ENCODE measurements at regions of chr1 and their contacts with region 1.

Region 1: DNA sequence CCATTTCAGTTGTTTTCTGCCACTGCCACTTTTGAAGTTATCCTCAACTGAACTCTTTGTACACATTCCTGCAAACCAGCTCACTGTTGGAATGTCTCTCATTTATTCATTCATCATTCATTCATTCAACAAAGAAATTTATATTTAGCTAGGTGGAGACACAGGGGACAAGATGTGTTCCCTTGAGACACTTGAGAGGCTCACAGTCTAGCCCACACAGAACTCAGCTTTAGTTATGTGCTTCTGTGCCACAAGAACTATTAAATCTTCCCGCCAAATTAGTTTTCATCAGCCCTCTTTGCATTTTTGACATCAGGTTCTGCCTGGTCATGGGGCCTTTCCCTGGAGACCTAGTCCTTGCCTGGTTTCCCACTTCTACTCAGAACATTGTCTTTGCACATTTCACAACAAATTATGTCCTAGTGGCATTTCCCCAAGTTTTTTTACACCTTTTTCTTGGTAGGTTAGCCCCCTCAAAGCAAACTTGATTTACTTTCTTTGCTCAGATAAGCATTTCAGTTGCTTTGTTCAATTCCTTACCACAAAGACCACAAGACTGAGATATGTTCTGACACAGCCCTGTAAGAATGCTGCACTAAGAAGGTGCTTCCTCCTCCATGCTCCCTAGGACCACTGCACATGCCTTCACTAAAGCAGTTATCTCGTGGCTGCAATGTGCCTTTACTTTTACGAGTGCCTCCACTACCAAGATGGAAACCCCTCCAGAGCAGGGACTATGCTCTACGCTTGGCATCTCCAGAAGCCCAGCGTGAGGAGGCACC is 31.0 kb downstream of the ILDR2 start:
- DNase-seq: no peak
- ATAC-seq: peak; percentile 61
- H3K4me3 Mint-ChIP-seq: no peak overlapping the region
- H3K27ac Mint-ChIP-seq: no peak overlapping the region
- H3K4me1 Mint-ChIP-seq: peaks cover 27% of the 10 kb centered on the region
- H3K27me3 Mint-ChIP-seq: peaks cover 27% of the 10 kb centered on the region

Region 2: GRCh38 chr1:166999090-166999489 is 54.7 kb after region 1 on chr1:
- CTCF ChIA-PET with region 1: no interaction called
- POLR2A ChIA-PET with region 1: no interaction called
- intact Hi-C with region 1: loop called in 1 of 2 experiments (anchors 5 kb)
- DNase-seq: no peak
- ATAC-seq: peak; percentile 39
- H3K4me3 Mint-ChIP-seq: no peak overlapping the region
- H3K27ac Mint-ChIP-seq: no peak overlapping the region
- H3K4me1 Mint-ChIP-seq: peaks cover 8% of the 10 kb centered on the region
- H3K27me3 Mint-ChIP-seq: peaks cover 3% of the 10 kb centered on the region

Measured in activated CD4-positive, alpha-beta T cell treated with anti-CD3 and anti-CD28 coated beads for 36 hours (primary cell).